ENCODE measurements at regions of chr20 and their contacts with region 1.

Region 1: GRCh38 chr20:42690842-42691437 is 498.8 kb downstream of the PTPRT start:
- DNase-seq: no peak
- ATAC-seq: no peak
- H3K4me3 ChIP-seq: no peak overlapping the region
- H3K4me3 Mint-ChIP-seq: no peak overlapping the region
- H3K27ac ChIP-seq: no peak overlapping the region
- H3K27ac Mint-ChIP-seq: no peak overlapping the region
- H3K4me1 ChIP-seq: no peaks in the 10 kb centered on the region
- H3K4me1 Mint-ChIP-seq: no peaks in the 10 kb centered on the region
- H3K27me3 ChIP-seq: no peaks in the 10 kb centered on the region
- H3K27me3 Mint-ChIP-seq: no peaks in the 10 kb centered on the region
- CTCF ChIP-seq: no peak

Region 2: GRCh38 chr20:42763015-42763414 is 72.1 kb after region 1 on chr20:
- CTCF ChIA-PET with region 1: no interaction called
- POLR2A ChIA-PET with region 1: no interaction called
- intact Hi-C with region 1: loop called in 1 of 2 experiments (anchors 2 kb)
- DNase-seq: no peak
- ATAC-seq: no peak
- H3K4me3 ChIP-seq: no peak overlapping the region
- H3K4me3 Mint-ChIP-seq: no peak overlapping the region
- H3K27ac ChIP-seq: no peak overlapping the region
- H3K27ac Mint-ChIP-seq: no peak overlapping the region
- H3K4me1 ChIP-seq: no peaks in the 10 kb centered on the region
- H3K4me1 Mint-ChIP-seq: no peaks in the 10 kb centered on the region
- H3K27me3 ChIP-seq: no peaks in the 10 kb centered on the region
- H3K27me3 Mint-ChIP-seq: no peaks in the 10 kb centered on the region
- CTCF ChIP-seq: no peak